Testis (tissue), 5 donors: ENCODE measurements at regions of chr12 and their contacts with region 1.

Region 1: GRCh38 chr12:17778242-17778641 is 311.8 kb downstream of the RERGL start:
- DNase-seq: no peak
- H3K4me3 ChIP-seq: no peak overlapping the region
- H3K27ac ChIP-seq: no peak overlapping the region
- H3K4me1 ChIP-seq: no peaks in the 10 kb centered on the region
- H3K27me3 ChIP-seq: no peaks in the 10 kb centered on the region
- CTCF ChIP-seq: no peak
- POLR2A ChIP-seq: no peak

Region 2: DNA sequence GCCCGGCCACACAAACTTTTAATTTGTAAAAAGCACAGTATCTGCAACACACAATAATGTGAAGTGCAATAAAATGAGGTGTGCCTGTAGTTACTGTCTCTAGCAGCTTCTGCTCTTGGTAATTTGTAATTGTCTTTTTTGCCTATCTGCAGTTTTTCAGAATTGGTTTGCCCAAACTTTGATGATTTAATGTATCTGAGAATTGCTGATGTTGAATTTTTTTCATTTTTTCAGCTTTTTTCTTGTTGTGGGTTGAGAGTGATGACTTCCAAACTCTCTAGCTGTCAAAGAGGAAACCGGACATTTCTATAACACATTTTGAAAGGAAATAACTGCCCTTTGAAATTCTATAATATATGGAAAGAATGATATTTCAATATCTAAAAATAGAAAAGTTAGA is 74.8 kb after region 1 on chr12:
- intact Hi-C with region 1: no loop called
- DNase-seq: no peak
- H3K4me3 ChIP-seq: no peak overlapping the region
- H3K27ac ChIP-seq: no peak overlapping the region
- H3K4me1 ChIP-seq: no peaks in the 10 kb centered on the region
- H3K27me3 ChIP-seq: no peaks in the 10 kb centered on the region
- CTCF ChIP-seq: no peak
- POLR2A ChIP-seq: no peak

Region 3: GRCh38 chr12:17875230-17875629 is 97.0 kb after region 1 on chr12:
- intact Hi-C with region 1: loop called (anchors 5 kb)
- DNase-seq: no peak
- H3K4me3 ChIP-seq: no peak overlapping the region
- H3K27ac ChIP-seq: no peak overlapping the region
- H3K4me1 ChIP-seq: no peaks in the 10 kb centered on the region
- H3K27me3 ChIP-seq: no peaks in the 10 kb centered on the region
- CTCF ChIP-seq: no peak
- POLR2A ChIP-seq: no peak